Panc1 (cell line): ENCODE measurements at regions of chr9 and their contacts with region 1.

Region 1: DNA sequence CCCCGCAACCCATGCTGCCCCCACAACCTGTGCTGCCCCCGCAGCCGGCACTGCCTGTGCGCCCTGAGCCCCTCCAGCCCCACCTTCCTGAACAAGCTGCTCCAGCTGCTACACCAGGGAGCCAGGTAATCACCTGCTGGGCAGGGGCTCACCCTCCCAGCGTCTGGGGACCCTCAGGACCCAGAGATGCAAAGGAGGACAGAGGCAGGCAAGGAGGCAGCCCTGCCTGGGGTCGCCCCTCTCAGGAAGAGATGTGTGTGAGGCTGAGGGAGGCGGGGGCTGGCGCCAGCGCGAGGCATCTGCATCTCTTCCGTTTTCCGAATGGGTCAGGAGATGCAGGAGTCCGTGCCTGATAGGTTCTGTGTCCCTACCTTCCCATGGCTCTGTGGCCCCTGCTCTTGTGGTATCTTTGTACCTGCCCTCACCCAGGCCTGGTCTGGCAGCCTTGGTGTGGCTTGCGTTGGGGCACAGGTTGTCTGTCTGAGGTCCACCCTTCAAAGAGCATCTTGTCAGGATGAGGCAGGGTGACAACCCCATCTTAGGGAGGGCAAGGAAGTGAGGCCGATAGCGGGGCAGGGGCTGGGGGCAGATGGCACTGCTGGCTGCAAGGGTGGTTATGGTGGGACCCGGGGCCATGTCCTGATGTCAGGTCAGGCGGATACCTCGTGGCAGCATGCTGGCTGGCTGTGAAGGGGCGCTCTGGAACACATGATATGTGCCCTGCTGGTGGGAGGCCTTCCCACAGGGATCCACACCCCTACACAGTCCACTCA is 75.7 kb downstream of the WNK2 start:
- DNase-seq: no peak
- ATAC-seq: no peak
- H3K4me3 ChIP-seq: no peak overlapping the region
- H3K27ac ChIP-seq: no peak overlapping the region
- H3K4me1 ChIP-seq: no peaks in the 10 kb centered on the region
- H3K27me3 ChIP-seq: no peaks in the 10 kb centered on the region
- CTCF ChIP-seq: no peak

Region 2: GRCh38 chr9:92223758-92224157 is 1035.9 kb before region 1 on chr9:
- CTCF ChIA-PET with region 1: no interaction called
- POLR2A ChIA-PET with region 1: no interaction called
- in situ Hi-C with region 1: no loop called
- intact Hi-C with region 1: no loop called
- DNase-seq: no peak
- ATAC-seq: no peak
- H3K4me3 ChIP-seq: no peak overlapping the region
- H3K27ac ChIP-seq: no peak overlapping the region
- H3K4me1 ChIP-seq: no peaks in the 10 kb centered on the region
- H3K27me3 ChIP-seq: no peaks in the 10 kb centered on the region
- CTCF ChIP-seq: no peak

Region 3: DNA sequence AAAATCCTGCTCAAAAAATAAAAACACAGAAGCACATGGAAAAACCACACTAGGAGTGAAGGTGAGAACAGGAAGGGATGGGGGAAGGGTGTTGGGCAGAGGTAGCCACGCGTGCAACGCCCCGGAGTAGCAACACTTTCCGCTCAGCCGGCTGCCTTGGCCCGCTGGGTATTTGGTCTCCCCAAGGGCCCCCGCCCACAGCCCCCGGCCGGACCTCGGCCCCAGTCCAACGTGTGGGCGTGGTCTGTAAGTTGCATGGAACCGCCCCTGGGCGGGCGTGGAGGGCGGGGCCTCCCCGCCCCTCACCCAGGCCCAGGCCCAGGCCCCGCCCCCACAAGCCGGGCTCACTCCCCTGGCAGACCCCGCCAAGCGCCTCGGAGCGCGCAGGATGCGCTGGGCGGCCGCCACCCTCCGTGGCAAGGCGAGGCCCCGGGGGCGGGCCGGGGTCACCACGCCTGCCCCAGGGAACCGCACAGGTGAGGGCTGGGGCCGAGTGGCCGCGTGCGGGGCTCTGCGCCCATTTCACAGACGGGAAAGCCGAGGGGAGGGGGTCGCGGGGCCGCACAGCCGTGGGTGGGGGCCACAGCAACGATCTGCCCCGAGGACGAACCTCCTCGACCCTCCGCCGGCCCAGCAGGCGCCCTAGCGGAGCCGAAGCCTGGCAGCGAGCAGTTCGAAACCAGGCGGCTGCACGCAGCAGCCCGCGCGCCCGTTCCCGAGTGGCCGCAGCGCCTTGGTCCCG is 201.2 kb before region 1 on chr9 and contains the start of gene SUSD3:
- CTCF ChIA-PET with region 1: no interaction called
- POLR2A ChIA-PET with region 1: interaction called, 18 read pairs
- in situ Hi-C with region 1: no loop called
- intact Hi-C with region 1: no loop called
- DNase-seq: no peak
- ATAC-seq: peak; percentile 73
- H3K4me3 ChIP-seq: peak within 1 kb of the TSS; percentile 35 to 41
- H3K27ac ChIP-seq: no peak within 1 kb of the TSS
- H3K4me1 ChIP-seq: peaks cover 19% of the 10 kb centered on the region
- H3K27me3 ChIP-seq: no peaks in the 10 kb centered on the region
- CTCF ChIP-seq: no peak
- total RNA-seq, gene SUSD3: 5.0 TPM